CD4-positive, alpha-beta T cell (primary cell): ENCODE measurements at regions of chr5 and their contacts with region 1.

Region 1: DNA sequence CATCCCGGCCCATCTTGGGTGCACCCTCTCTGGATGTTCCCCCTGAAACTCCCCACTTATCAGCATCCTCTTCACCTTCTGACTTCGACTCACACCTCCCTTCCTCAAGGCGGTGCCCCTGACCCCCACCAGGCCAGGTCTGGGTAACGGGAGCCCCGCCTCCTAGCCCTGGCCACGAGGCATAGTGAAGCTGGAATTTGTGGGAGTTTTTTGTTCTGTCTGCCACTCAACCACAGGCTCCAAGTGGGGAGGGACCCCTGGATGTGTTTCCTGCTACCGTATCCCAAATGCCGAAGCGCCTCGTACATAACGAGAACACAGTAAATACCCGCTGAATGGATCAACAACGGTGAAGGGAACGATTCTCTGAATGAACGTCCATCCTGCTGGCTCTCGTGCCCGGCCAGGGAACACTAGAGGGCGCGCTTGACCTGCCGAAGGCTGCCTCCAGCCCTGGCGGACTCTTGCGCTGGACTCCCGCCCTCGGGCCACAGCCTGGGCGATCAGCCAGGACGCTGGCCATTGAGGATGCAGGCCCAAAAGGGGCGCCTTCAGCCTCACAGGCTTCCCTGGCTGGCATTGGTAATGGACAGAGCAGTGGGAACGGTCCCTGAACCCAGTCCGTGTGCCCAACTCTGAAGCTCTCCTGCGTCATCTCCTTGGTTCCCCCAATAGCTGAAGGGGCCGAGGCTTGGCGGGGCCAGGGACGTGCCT is 47.3 kb upstream of the PHYKPL start:
- DNase-seq: peak; percentile 18 to 71 (median 47)
- ATAC-seq: no peak
- H3K4me3 ChIP-seq: no peak overlapping the region
- H3K4me3 Mint-ChIP-seq: no peak overlapping the region
- H3K27ac ChIP-seq: no peak overlapping the region
- H3K27ac Mint-ChIP-seq: no peak overlapping the region
- H3K4me1 ChIP-seq: peaks cover 7% of the 10 kb centered on the region
- H3K4me1 Mint-ChIP-seq: no peaks in the 10 kb centered on the region
- H3K27me3 ChIP-seq: peaks cover 0 to 4% of the 10 kb centered on the region in 2 experiments
- H3K27me3 Mint-ChIP-seq: peaks cover 4% of the 10 kb centered on the region
- CTCF ChIP-seq: peak; percentile 80

Region 2: GRCh38 chr5:178551059-178551458 is 271.2 kb after region 1 on chr5:
- CTCF ChIA-PET with region 1: interaction called, 3 read pairs
- POLR2A ChIA-PET with region 1: no interaction called
- intact Hi-C with region 1: loop called in 1 of 2 experiments (anchors 1 kb)
- DNase-seq: peak in 1 of 14 experiments; percentile 29
- ATAC-seq: no peak
- H3K4me3 ChIP-seq: no peak overlapping the region
- H3K4me3 Mint-ChIP-seq: no peak overlapping the region
- H3K27ac ChIP-seq: no peak overlapping the region
- H3K27ac Mint-ChIP-seq: no peak overlapping the region
- H3K4me1 ChIP-seq: no peaks in the 10 kb centered on the region
- H3K4me1 Mint-ChIP-seq: no peaks in the 10 kb centered on the region
- H3K27me3 ChIP-seq: no peaks in the 10 kb centered on the region
- H3K27me3 Mint-ChIP-seq: peaks cover 24% of the 10 kb centered on the region
- CTCF ChIP-seq: peak; percentile 59

Region 3: GRCh38 chr5:178838695-178839685 is 559.1 kb after region 1 on chr5:
- CTCF ChIA-PET with region 1: no interaction called
- POLR2A ChIA-PET with region 1: no interaction called
- intact Hi-C with region 1: loop called (anchors 1 to 5 kb)
- DNase-seq: peak; percentile 10 to 71 (median 36)
- ATAC-seq: peak; percentile 55
- H3K4me3 ChIP-seq: no peak overlapping the region
- H3K4me3 Mint-ChIP-seq: no peak overlapping the region
- H3K27ac ChIP-seq: no peak overlapping the region
- H3K27ac Mint-ChIP-seq: no peak overlapping the region
- H3K4me1 ChIP-seq: no peaks in the 10 kb centered on the region
- H3K4me1 Mint-ChIP-seq: no peaks in the 10 kb centered on the region
- H3K27me3 ChIP-seq: no peaks in the 10 kb centered on the region
- H3K27me3 Mint-ChIP-seq: no peaks in the 10 kb centered on the region
- CTCF ChIP-seq: peak; percentile 56

Region 4: DNA sequence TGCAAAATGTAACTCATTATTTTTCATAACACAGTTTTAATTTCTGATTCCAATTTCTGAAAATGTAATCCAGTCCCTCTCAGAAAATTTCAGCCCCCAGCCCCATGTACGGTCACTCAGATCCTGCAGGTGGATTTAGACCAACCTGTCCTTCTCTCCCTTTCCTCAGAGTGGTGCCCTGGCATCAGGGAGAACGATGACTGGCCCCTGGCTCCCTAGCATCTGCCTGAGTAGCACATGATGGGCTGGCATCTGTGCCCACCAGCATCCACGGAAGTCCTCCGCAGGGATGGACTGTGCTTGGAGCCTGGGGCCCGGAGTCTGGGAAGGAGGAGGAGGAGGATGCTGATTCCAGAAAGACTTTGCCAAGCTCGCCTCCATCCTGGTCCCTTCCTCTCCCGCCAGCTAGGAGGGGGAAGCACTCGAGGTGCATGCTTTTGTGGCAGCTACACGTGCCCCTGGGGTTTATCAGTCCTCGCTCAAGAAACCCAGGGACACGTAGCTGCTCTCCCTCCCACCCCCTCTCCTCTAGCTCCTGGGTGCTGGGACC is 1216.1 kb after region 1 on chr5:
- CTCF ChIA-PET with region 1: no interaction called
- POLR2A ChIA-PET with region 1: no interaction called
- intact Hi-C with region 1: loop called in 1 of 2 experiments (anchors 2 kb)
- DNase-seq: no peak
- ATAC-seq: no peak
- H3K4me3 ChIP-seq: no peak overlapping the region
- H3K4me3 Mint-ChIP-seq: no peak overlapping the region
- H3K27ac ChIP-seq: no peak overlapping the region
- H3K27ac Mint-ChIP-seq: no peak overlapping the region
- H3K4me1 ChIP-seq: no peaks in the 10 kb centered on the region
- H3K4me1 Mint-ChIP-seq: no peaks in the 10 kb centered on the region
- H3K27me3 ChIP-seq: no peaks in the 10 kb centered on the region
- H3K27me3 Mint-ChIP-seq: peaks cover 5% of the 10 kb centered on the region
- CTCF ChIP-seq: no peak